CD4-positive, alpha-beta T cell (primary cell): ENCODE measurements at regions of chr11 and their contacts with region 1.

Region 1: DNA sequence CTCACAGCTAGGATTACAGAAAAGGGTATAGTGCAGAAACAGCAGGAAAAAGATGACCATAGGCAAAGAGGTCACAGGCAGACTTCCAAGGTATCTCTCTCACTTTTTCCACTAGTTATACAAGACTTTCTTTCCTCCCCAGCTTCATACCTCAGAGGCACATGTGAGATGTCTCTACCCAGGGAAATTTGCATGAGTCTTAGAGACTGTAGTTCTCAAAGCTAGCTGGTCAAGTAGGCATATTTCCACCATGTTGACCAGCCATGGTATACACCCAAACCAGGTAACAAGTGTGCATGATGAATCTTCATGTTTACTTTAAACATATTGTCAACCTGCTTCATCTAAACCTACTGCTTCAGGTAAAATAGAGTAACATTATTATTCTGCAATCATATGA is 27.9 kb downstream of the PRMT3 start:
- DNase-seq: no peak
- ATAC-seq: no peak
- H3K4me3 ChIP-seq: no peak overlapping the region
- H3K4me3 Mint-ChIP-seq: no peak overlapping the region
- H3K27ac ChIP-seq: no peak overlapping the region
- H3K27ac Mint-ChIP-seq: no peak overlapping the region
- H3K4me1 ChIP-seq: no peaks in the 10 kb centered on the region
- H3K4me1 Mint-ChIP-seq: peaks cover 15% of the 10 kb centered on the region
- H3K27me3 ChIP-seq: no peaks in the 10 kb centered on the region
- H3K27me3 Mint-ChIP-seq: no peaks in the 10 kb centered on the region
- CTCF ChIP-seq: no peak

Region 2: GRCh38 chr11:20397281-20397680 is 18.2 kb before region 1 on chr11:
- CTCF ChIA-PET with region 1: interaction called, 10 read pairs
- POLR2A ChIA-PET with region 1: no interaction called
- intact Hi-C with region 1: no loop called
- DNase-seq: peak in 5 of 14 experiments; percentile 15 to 64 (median 57)
- ATAC-seq: peak; percentile 96
- H3K4me3 ChIP-seq: no peak overlapping the region
- H3K4me3 Mint-ChIP-seq: no peak overlapping the region
- H3K27ac ChIP-seq: no peak overlapping the region
- H3K27ac Mint-ChIP-seq: no peak overlapping the region
- H3K4me1 ChIP-seq: no peaks in the 10 kb centered on the region
- H3K4me1 Mint-ChIP-seq: peaks cover 23% of the 10 kb centered on the region
- H3K27me3 ChIP-seq: no peaks in the 10 kb centered on the region
- H3K27me3 Mint-ChIP-seq: no peaks in the 10 kb centered on the region
- CTCF ChIP-seq: peak; percentile 69